ENCODE measurements at regions of chr19 and their contacts with region 1.

Region 1: DNA sequence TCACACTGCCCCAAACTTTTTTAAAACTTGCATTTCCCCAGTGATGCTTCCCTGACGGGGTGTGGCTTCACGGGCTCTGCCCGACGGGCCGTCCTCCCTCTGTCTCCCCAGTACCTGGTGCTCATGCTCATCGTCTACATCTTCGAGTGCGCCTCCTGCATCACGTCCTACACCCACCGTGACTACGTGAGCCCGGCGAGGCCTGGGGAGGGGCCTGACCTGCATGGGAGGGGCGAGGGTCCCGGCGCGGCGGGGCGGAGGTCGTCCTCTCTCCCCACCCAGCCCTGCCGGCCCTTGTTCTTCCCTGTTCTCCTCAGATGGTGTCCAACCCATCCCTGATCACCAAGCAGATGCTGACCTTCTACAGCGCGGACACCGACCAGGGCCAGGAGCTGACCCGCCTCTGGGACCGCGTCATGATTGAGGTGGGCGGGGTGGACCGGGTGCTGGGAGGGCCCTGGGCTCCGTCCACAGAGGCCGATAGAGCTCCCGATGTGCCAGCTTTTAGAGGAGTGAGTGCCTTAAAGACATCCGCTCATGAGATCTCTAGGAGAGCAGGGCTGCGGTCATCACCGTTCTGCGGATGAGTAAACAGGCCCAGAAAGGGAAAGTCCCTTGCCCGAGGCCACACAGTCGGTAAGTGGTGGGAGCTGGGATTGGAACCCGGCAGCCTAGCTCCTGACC is 6.9 kb downstream of the UPK1A start:
- DNase-seq: peak; percentile 58
- H3K4me3 Mint-ChIP-seq: peak overlapping the region; percentile 81
- H3K27ac Mint-ChIP-seq: peak overlapping the region; percentile 29
- H3K4me1 Mint-ChIP-seq: peaks cover 15% of the 10 kb centered on the region
- H3K27me3 Mint-ChIP-seq: peaks cover 37% of the 10 kb centered on the region

Region 2: GRCh38 chr19:35449053-35449687 is 224.1 kb before region 1 on chr19:
- intact Hi-C with region 1: no loop called
- DNase-seq: no peak
- H3K4me3 Mint-ChIP-seq: no peak overlapping the region
- H3K27ac Mint-ChIP-seq: no peak overlapping the region
- H3K4me1 Mint-ChIP-seq: peaks cover 31% of the 10 kb centered on the region
- H3K27me3 Mint-ChIP-seq: peaks cover 29% of the 10 kb centered on the region

Region 3: DNA sequence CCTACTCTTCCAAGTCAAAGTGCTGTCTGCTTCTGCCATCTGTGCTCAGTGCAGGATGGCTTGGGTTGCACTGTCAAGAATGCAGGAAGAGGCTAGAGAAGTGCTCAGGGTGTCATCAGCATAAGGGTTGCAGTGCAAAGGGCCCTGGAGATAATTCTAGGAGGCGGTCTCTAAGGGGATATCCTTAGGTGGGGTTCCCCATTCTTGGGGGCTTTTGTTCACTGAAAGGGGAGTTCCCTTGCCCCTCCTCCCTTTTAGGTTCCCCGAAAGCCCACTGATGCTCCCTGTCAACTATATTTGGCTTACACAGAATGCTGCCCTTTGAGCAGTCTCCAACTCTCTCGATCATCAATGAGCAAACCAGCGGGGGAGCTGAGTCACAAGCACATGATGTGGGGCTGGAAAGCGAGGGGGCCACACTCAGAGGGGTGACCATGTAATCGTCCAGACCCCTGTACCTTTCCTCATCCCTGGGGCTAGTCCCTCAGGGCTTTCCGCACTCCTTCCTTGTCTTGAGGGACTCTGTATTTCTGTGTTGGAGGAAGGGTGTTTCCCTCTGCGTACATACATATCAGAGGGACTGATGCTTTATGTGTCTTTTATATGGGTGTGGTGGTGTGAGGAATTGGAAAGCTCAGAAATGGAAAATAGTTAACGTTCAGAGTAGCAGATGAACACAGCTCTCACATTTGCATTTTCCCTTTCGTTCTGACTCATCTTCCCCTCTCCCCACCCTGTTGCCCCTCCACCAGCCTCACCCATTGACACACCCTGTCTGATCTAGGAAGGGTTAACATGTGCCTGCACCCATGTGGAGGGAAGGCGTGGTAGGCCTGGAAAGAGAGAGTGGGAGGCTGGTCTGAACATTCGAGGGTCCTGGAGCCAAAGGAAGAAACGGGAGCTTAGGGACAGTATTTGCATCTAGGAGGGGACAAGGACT is 37.8 kb after region 1 on chr19:
- intact Hi-C with region 1: loop called (anchors 2 kb)
- DNase-seq: peak; percentile 63
- H3K4me3 Mint-ChIP-seq: peak overlapping the region; percentile 63
- H3K27ac Mint-ChIP-seq: peak overlapping the region; percentile 95
- H3K4me1 Mint-ChIP-seq: peaks cover 46% of the 10 kb centered on the region
- H3K27me3 Mint-ChIP-seq: no peaks in the 10 kb centered on the region